MCF 10A (cell line): ENCODE measurements at regions of chr5 and their contacts with region 1.

Region 1: GRCh38 chr5:142888469-142889085 is 118.4 kb downstream of the ARHGAP26 start:
- DNase-seq: peak; percentile 83
- H3K4me3 Mint-ChIP-seq: no peak overlapping the region
- H3K27ac Mint-ChIP-seq: no peak overlapping the region
- H3K4me1 Mint-ChIP-seq: no peaks in the 10 kb centered on the region
- H3K27me3 Mint-ChIP-seq: no peaks in the 10 kb centered on the region
- CTCF ChIP-seq: peak; percentile 89

Region 2: DNA sequence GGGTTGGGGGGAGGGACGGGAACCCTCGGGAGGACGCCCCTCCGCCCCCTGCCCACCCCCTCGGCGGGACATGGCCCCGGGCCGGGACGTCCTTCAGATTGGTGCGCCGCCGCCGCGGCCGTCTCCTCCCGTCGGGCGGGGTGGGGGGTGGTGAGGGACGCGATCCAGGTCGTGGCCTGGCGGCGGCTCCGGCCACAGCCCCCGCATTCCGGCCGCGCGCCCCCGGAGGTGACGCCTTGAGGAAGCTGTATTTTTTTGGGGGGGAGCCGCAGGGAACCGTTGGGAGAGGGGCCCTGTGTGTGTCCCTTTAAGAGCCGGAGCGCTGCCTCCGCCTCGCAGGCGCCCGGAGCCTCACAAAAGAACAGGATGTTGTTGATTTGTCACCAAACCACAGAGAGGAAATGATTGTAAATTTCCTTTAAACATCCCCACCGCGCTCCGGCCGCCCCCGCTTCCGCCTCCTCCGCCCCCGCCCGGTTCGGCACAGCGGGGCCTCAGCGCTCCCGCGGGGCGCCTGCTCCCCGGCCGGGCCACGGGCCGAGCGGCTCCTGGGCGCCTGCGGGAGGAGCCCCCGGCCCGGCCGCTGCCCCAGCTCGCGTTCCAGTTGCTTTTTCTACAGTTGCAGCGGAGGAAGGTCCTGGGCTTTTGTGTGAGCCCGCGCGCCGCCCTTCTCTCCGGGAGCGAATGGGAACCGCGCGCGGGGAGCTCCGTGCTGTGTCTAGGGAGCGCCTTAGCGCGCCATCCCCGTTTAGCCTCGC is 531.7 kb before region 1 on chr5:
- CTCF ChIA-PET with region 1: no interaction called
- POLR2A ChIA-PET with region 1: no interaction called
- intact Hi-C with region 1: no loop called
- DNase-seq: peak; percentile 95
- H3K4me3 Mint-ChIP-seq: peak overlapping the region; percentile 82
- H3K27ac Mint-ChIP-seq: peak overlapping the region; percentile 86
- H3K4me1 Mint-ChIP-seq: peaks cover 6% of the 10 kb centered on the region
- H3K27me3 Mint-ChIP-seq: no peaks in the 10 kb centered on the region
- CTCF ChIP-seq: no peak

Region 3: GRCh38 chr5:142455856-142456255 is 432.7 kb before region 1 on chr5:
- CTCF ChIA-PET with region 1: no interaction called
- POLR2A ChIA-PET with region 1: no interaction called
- intact Hi-C with region 1: no loop called
- DNase-seq: no peak
- H3K4me3 Mint-ChIP-seq: no peak overlapping the region
- H3K27ac Mint-ChIP-seq: no peak overlapping the region
- H3K4me1 Mint-ChIP-seq: no peaks in the 10 kb centered on the region
- H3K27me3 Mint-ChIP-seq: no peaks in the 10 kb centered on the region
- CTCF ChIP-seq: no peak

Region 4: DNA sequence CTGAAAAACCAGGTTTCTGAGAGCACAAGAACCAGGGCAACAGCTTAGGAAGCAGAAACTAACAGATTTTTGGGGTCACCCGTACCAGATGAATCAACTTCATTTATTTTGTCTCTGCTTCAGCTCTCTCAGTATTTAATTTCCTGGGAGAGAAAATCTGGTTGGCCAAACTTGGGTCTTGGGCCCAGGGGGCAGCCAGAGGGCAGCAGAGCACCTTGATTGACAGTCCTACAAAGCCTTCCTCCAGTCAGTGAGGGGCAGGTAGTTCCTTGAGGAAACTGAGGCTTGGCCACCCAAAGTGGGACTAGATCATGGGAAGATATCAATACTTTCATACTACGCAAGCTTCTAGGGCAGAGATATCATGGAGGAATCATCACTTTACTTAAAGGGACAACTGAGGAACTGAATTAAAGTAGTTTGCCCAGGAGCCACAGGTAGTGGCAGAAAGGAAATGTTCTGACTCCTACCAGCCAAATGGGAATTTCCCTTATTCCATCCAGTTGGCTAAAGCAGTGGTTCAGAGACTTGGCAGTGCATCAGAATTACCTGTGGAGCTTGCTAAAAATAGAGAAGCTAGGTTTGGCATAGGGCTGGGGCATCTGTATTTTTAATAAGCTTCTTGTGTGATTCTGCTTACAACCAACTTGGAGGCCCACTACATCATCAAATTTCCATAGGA is 139.9 kb before region 1 on chr5:
- CTCF ChIA-PET with region 1: interaction called, 130 read pairs
- POLR2A ChIA-PET with region 1: interaction called, 3 read pairs
- intact Hi-C with region 1: no loop called
- DNase-seq: peak; percentile 84
- H3K4me3 Mint-ChIP-seq: no peak overlapping the region
- H3K27ac Mint-ChIP-seq: peak overlapping the region; percentile 20
- H3K4me1 Mint-ChIP-seq: peaks cover 44% of the 10 kb centered on the region
- H3K27me3 Mint-ChIP-seq: no peaks in the 10 kb centered on the region
- CTCF ChIP-seq: peak; percentile 87

Region 5: DNA sequence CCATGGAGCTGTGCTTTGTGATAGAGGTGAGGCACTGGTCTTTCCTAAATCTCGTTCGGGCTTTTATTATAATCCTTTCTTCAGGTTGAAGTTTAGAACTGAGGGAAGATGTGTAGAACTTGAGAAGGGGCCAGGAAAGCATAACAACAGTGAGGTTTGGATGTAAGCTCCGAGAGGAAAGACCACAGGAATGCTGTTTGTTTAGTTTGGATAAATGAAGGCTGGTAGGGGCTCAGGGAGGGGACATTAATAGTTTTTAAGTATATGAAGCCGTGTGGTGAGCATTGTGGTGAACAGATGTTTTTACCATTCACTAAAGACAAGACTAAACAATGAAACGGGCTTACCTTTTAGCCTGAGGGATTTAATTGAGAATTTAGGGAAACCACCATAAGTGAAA is 12.3 kb after region 1 on chr5:
- CTCF ChIA-PET with region 1: interaction called, 76 read pairs
- POLR2A ChIA-PET with region 1: interaction called, 5 read pairs
- intact Hi-C with region 1: no loop called
- DNase-seq: peak; percentile 21
- H3K4me3 Mint-ChIP-seq: no peak overlapping the region
- H3K27ac Mint-ChIP-seq: peak overlapping the region; percentile 24
- H3K4me1 Mint-ChIP-seq: peaks cover 27% of the 10 kb centered on the region
- H3K27me3 Mint-ChIP-seq: no peaks in the 10 kb centered on the region
- CTCF ChIP-seq: no peak

Region 6: DNA sequence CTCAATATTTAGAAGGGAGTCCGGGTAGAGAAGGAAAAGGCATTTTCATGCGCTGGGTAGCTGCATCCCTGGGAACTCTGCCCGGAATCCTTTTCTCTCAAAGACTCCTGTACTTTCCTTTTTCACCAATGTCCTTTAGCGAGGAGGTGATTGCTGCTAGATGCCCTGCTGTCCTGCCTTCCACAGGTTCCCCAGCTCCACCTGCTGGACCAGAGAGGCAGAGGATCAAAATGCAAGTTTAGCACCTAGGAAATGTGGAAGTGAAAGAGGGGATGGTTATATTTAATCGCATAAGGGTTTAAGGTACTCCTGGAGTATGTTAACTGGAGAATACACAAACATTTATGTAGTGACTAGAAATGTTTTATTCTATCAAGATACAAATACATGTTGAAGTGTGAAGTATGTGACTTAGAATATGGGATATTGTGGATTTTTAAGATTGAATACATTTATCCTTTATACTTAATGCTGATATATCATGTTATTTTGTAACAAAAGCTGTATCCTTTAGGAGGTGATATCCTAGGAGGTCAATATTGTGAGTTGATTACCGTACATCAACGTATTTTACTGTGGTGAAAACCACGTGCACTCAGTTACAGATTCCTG is 27.3 kb after region 1 on chr5:
- CTCF ChIA-PET with region 1: interaction called, 122 read pairs
- POLR2A ChIA-PET with region 1: no interaction called
- intact Hi-C with region 1: loop called (anchors 1 kb)
- DNase-seq: peak; percentile 78
- H3K4me3 Mint-ChIP-seq: no peak overlapping the region
- H3K27ac Mint-ChIP-seq: no peak overlapping the region
- H3K4me1 Mint-ChIP-seq: peaks cover 7% of the 10 kb centered on the region
- H3K27me3 Mint-ChIP-seq: no peaks in the 10 kb centered on the region
- CTCF ChIP-seq: peak; percentile 79